IMR-90 (cell line): ENCODE measurements at regions of chr12 and their contacts with region 1.

Region 1: GRCh38 chr12:52167954-52168717 is 23.7 kb downstream of the KRT80 start:
- DNase-seq: peak; percentile 88
- ATAC-seq: peak; percentile 48
- H3K4me3 ChIP-seq: no peak overlapping the region
- H3K27ac ChIP-seq: no peak overlapping the region
- H3K4me1 ChIP-seq: peaks cover 18% of the 10 kb centered on the region
- H3K27me3 ChIP-seq: no peaks in the 10 kb centered on the region
- CTCF ChIP-seq: no peak
- POLR2A ChIP-seq: no peak
- RAD21 ChIP-seq: no peak; the same call in 1 of the 2 replicates

Region 2: GRCh38 chr12:51823875-51824565 is 344.1 kb before region 1 on chr12:
- CTCF ChIA-PET with region 1: no interaction called
- POLR2A ChIA-PET with region 1: no interaction called
- dilution Hi-C with region 1: no loop called
- in situ Hi-C with region 1: no loop called
- intact Hi-C with region 1: no loop called
- DNase-seq: peak; percentile 73
- ATAC-seq: peak; percentile 33; the same call in 1 of the 2 replicates
- H3K4me3 ChIP-seq: no peak overlapping the region
- H3K27ac ChIP-seq: no peak overlapping the region
- H3K4me1 ChIP-seq: peaks cover 3% of the 10 kb centered on the region; the same call in 1 of the 2 replicates
- H3K27me3 ChIP-seq: no peaks in the 10 kb centered on the region; the same call in 1 of the 2 replicates
- CTCF ChIP-seq: peak; percentile 68
- POLR2A ChIP-seq: no peak
- RAD21 ChIP-seq: peak; percentile 83

Region 3: DNA sequence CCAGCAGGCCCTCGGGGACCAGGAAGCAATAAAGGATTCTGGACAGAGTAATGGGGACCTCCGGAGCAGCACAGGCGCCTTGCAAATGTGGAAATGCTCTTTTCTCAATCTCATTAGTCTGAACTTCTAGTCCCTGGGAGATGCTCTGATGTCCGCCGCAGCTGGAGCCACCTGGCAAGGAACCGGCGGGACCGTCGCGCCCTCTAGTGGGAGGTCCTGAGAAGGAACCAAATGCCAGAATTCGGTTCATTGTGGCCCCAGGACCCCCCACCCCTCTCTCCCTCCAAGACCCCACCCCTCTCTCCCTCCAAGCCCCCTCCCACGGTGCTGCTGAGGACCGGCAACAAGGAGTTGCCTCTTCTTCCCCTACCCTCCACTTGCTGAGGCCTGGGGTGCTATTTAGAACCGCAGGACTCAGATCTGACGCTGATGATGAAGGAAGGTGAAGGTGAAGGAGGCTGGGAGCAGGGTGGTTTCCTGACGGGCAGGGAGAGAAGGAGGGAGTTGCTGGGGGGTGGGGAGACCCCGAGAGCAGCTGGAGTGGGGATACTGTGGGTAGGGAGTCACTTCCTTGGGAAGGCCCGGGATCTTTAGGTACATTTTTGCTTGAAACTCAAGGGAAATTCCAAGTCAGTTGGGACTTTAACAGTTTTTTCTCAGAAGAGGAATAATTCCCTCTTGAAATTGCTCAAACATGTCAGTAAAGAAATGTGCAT is 46.2 kb before region 1 on chr12:
- CTCF ChIA-PET with region 1: no interaction called
- POLR2A ChIA-PET with region 1: no interaction called
- dilution Hi-C with region 1: no loop called
- in situ Hi-C with region 1: no loop called
- intact Hi-C with region 1: no loop called
- DNase-seq: peak; percentile 58
- ATAC-seq: peak; percentile 75
- H3K4me3 ChIP-seq: no peak overlapping the region
- H3K27ac ChIP-seq: no peak overlapping the region
- H3K4me1 ChIP-seq: no peaks in the 10 kb centered on the region
- H3K27me3 ChIP-seq: peaks cover 5% of the 10 kb centered on the region
- CTCF ChIP-seq: peak; percentile 76
- POLR2A ChIP-seq: no peak
- RAD21 ChIP-seq: peak; percentile 76

Region 4: DNA sequence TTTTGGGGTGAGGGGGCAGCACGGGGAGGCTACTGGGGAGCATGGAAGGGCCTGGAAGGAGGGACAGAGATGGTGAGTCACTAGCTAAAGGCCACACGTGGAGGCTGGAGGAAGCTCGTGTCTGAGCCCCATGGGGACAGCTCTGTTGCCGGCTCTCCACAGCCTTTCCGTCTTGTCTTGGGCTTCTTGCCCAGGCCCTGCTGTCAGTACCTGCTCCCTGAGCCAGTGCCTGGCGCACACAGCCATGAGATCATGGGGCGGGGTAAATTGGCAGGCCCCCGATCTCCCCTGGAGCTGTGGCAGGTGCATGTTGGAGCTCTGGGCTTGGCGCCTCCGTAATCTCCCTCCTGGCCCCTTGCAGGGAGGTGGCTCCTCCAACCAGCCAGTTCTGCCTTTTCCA is 39.8 kb after region 1 on chr12:
- CTCF ChIA-PET with region 1: interaction called, 3 read pairs
- POLR2A ChIA-PET with region 1: no interaction called
- dilution Hi-C with region 1: no loop called
- in situ Hi-C with region 1: loop called (anchors 5 kb)
- intact Hi-C with region 1: no loop called
- DNase-seq: peak; percentile 28
- ATAC-seq: no peak; the same call in 1 of the 2 replicates
- H3K4me3 ChIP-seq: no peak overlapping the region
- H3K27ac ChIP-seq: no peak overlapping the region
- H3K4me1 ChIP-seq: peaks cover 27% of the 10 kb centered on the region
- H3K27me3 ChIP-seq: no peaks in the 10 kb centered on the region
- CTCF ChIP-seq: no peak
- POLR2A ChIP-seq: no peak
- RAD21 ChIP-seq: no peak